T-cell (primary cell): ENCODE measurements at regions of chr10 and their contacts with region 1.

Region 1: DNA sequence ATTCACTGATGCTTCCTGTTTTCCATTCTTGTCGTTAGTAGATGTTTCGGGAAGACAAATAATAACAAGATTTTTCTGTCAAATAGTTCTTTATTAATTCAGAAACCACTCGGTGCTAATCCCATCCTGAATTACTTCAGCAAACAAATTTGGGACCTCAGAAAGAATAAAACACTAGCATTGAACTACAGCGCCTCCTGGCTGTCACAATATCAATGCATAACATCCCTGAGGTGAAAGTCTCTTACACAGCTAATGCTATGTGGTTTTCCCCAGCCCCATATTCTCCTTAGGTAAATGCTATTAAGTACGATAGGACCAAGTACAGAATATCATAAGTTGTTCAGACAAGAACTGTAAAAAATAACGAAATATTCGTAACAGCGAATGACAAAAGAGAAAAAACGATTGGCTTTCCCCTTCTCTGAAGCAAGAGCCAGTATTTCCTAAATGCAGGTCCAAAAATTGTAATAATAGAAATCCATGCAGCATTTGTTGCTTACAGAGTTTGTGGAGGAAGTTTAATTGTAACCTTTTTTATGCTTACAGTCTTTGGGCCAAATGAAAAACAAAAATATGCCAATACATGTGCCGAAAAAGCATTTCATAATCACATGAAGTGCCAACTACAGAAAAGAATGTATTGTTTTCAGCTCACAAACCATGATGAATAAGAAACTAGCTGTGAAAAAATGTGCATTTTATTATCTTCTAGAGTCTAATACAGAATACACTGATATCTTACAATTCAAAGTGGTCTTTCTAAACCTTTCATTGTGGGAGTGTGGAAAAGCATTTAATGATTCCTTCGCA is 47.3 kb downstream of the MYPN start:
- DNase-seq: peak in 34 of 35 experiments; percentile 8 to 81 (median 44)
- ATAC-seq: peak in 2 of 4 experiments; percentile 57 to 66
- H3K4me3 ChIP-seq: no peak overlapping the region
- H3K4me3 Mint-ChIP-seq: no peak overlapping the region
- H3K27ac ChIP-seq: no peak overlapping the region
- H3K27ac Mint-ChIP-seq: no peak overlapping the region
- H3K4me1 ChIP-seq: no peaks in the 10 kb centered on the region
- H3K4me1 Mint-ChIP-seq: peaks cover 0 to 4% (median 0%) of the 10 kb centered on the region in 3 donors
- H3K27me3 ChIP-seq: no peaks in the 10 kb centered on the region
- H3K27me3 Mint-ChIP-seq: peaks cover 0 to 6% of the 10 kb centered on the region in 2 donors

Region 2: GRCh38 chr10:67788025-67788886 is 368.3 kb before region 1 on chr10:
- CTCF ChIA-PET with region 1: interaction called, 18 to 45 read pairs
- POLR2A ChIA-PET with region 1: no interaction called
- DNase-seq: peak; percentile 14 to 74 (median 54)
- ATAC-seq: peak; percentile 64 to 79 (median 72)
- H3K4me3 ChIP-seq: no peak overlapping the region
- H3K4me3 Mint-ChIP-seq: peak overlapping the region in 2 of 3 donors; percentile 14 to 45
- H3K27ac ChIP-seq: no peak overlapping the region
- H3K27ac Mint-ChIP-seq: no peak overlapping the region
- H3K4me1 ChIP-seq: peaks cover 0 to 9% of the 10 kb centered on the region in 2 experiments
- H3K4me1 Mint-ChIP-seq: peaks cover 25 to 40% (median 26%) of the 10 kb centered on the region in 3 donors
- H3K27me3 ChIP-seq: no peaks in the 10 kb centered on the region
- H3K27me3 Mint-ChIP-seq: peaks cover 0 to 4% of the 10 kb centered on the region in 2 donors

Region 3: DNA sequence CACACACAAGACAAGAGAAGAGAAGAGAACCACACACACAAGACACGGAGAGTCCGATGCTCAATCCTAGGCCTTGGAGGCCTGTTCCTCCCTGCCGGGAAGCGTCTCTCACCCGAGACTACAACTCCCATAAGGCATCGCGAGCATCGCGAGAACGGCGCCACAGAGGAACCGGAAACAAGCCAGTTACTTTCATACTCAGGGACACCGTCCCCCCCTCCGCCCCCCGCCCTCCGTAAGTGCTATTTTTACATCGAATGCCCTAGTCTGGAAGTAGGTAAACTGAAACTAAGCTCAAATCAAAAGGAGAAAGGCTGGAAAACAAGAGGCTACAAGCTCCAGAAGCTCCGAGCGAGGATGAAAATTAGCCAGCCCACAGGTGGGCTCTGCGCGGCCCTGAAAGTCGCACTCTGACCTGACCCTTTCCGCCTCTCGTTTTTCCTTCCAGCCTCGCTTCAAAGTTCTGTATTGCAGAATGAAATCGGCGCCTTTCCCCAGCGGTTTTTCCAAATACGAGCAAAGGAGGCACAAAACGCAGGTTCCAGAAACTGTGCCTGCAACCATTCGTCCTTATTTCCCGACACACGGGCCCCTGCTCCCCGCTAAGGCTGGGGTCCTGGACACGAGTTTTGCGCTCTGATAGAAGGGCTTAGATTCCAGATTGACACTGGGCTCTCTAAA is 307.1 kb before region 1 on chr10:
- CTCF ChIA-PET with region 1: interaction called, 38 to 96 read pairs
- POLR2A ChIA-PET with region 1: no interaction called
- DNase-seq: peak; percentile 81 to 94 (median 90)
- ATAC-seq: peak; percentile 97 to 99 (median 99)
- H3K4me3 ChIP-seq: peak overlapping the region; percentile 72 to 79
- H3K4me3 Mint-ChIP-seq: peak overlapping the region; percentile 82 to 93 (median 92)
- H3K27ac ChIP-seq: peak overlapping the region; percentile 92
- H3K27ac Mint-ChIP-seq: peak overlapping the region; percentile 91 to 99
- H3K4me1 ChIP-seq: peaks cover 3 to 11% of the 10 kb centered on the region in 2 experiments
- H3K4me1 Mint-ChIP-seq: peaks cover 0 to 12% (median 11%) of the 10 kb centered on the region in 3 donors
- H3K27me3 ChIP-seq: peaks cover 0 to 3% of the 10 kb centered on the region in 2 experiments
- H3K27me3 Mint-ChIP-seq: no peaks in the 10 kb centered on the region

Region 4: DNA sequence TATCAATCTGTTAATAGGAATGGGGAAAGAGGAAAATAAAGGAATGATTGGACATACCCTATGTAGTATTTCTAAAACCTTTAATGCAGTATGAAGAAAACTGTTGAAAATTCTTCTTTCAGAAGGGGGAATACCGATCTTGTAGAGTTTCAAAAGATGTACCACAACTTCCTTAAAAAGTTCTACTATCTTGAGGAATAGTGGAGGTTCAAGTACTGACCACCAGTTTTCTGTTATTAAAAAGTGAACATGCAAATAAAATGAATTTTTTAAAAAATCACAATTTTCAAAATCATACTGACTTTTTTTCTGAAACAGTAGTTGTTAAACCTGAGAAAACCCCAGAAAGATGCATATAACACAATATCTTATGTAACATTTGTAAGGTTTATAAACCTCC is 168.0 kb before region 1 on chr10:
- CTCF ChIA-PET with region 1: no interaction called
- POLR2A ChIA-PET with region 1: no interaction called
- DNase-seq: no peak
- ATAC-seq: no peak
- H3K4me3 ChIP-seq: no peak overlapping the region
- H3K4me3 Mint-ChIP-seq: no peak overlapping the region
- H3K27ac ChIP-seq: no peak overlapping the region
- H3K27ac Mint-ChIP-seq: no peak overlapping the region
- H3K4me1 ChIP-seq: no peaks in the 10 kb centered on the region
- H3K4me1 Mint-ChIP-seq: peaks cover 6 to 11% (median 9%) of the 10 kb centered on the region in 3 donors
- H3K27me3 ChIP-seq: no peaks in the 10 kb centered on the region
- H3K27me3 Mint-ChIP-seq: no peaks in the 10 kb centered on the region

Region 5: DNA sequence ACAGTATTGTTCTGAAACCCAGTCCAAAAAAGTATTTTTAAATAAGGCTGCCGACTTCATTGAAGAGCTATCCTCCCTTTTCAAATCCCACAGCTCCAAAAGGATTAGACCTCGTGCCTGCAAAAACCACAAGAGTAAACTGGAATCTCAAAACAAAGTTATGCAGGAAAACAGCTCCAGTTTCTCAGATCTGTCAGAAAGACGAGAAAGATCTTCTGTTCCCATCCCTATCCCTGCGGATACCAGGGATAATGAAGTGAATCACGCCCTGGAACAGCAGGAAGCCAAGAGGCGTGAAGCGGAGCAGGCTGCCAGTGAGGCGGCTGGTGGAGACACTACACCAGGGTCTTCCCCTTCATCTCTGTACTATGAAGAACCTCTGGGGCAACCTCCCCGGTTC is 34.7 kb before region 1 on chr10:
- CTCF ChIA-PET with region 1: interaction called in 1 of 2 experiments, 11 read pairs
- POLR2A ChIA-PET with region 1: no interaction called
- DNase-seq: no peak
- ATAC-seq: no peak
- H3K4me3 ChIP-seq: no peak overlapping the region
- H3K4me3 Mint-ChIP-seq: no peak overlapping the region
- H3K27ac ChIP-seq: no peak overlapping the region
- H3K27ac Mint-ChIP-seq: no peak overlapping the region
- H3K4me1 ChIP-seq: no peaks in the 10 kb centered on the region
- H3K4me1 Mint-ChIP-seq: no peaks in the 10 kb centered on the region
- H3K27me3 ChIP-seq: peaks cover 0 to 10% of the 10 kb centered on the region in 2 experiments
- H3K27me3 Mint-ChIP-seq: peaks cover 9 to 12% of the 10 kb centered on the region in 2 donors

Region 6: DNA sequence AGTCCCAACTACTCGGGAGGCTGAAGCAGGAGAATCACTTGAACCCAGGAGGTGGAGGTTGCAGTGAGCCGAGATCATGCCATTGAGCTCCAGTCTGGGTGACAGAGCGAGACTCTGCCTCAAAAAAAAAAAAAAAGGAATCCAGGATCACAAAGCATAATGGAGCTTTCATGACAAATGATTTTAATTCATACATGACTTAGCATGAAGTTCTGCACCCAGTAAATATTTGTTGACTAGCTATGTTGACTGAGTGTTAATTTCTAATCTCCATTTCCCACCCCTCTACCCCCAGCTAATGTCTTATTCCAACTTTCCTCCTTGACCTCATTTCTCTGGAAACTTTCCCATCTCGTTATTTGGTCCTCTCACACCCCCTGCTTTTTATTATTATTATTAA is 22.0 kb after region 1 on chr10:
- CTCF ChIA-PET with region 1: interaction called, 3 to 10 read pairs
- POLR2A ChIA-PET with region 1: interaction called in 1 of 2 experiments, 5 read pairs
- DNase-seq: no peak
- ATAC-seq: no peak
- H3K4me3 ChIP-seq: no peak overlapping the region
- H3K4me3 Mint-ChIP-seq: no peak overlapping the region
- H3K27ac ChIP-seq: no peak overlapping the region
- H3K27ac Mint-ChIP-seq: no peak overlapping the region
- H3K4me1 ChIP-seq: no peaks in the 10 kb centered on the region
- H3K4me1 Mint-ChIP-seq: no peaks in the 10 kb centered on the region
- H3K27me3 ChIP-seq: peaks cover 0 to 3% of the 10 kb centered on the region in 2 experiments
- H3K27me3 Mint-ChIP-seq: no peaks in the 10 kb centered on the region